ENCODE measurements at regions of chr20 and their contacts with region 1.

Region 1: GRCh38 chr20:45097485-45098102 is 3.3 kb downstream of the KCNS1 start:
- DNase-seq: no peak

Region 2: DNA sequence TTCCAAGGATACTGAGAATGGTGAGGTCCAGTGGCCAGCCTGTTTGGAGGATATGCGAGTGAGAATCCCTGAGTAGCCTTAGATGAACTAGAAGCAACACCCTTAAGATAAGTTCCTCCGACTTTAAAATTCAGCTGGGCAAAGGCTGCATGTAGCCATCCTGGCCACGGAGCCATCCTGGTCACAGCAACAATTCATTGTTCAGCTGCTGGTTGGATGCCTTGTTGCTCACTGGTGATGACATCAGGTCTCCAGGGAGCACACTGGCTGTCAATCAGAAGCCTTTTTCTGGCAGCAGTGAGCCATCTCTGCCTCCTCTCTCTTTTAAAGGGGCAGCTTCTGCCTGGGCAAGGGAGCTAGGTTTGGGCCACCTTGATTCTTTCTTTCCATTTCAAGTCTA is 264.9 kb before region 1 on chr20:
- intact Hi-C with region 1: no loop called
- DNase-seq: no peak

Region 3: DNA sequence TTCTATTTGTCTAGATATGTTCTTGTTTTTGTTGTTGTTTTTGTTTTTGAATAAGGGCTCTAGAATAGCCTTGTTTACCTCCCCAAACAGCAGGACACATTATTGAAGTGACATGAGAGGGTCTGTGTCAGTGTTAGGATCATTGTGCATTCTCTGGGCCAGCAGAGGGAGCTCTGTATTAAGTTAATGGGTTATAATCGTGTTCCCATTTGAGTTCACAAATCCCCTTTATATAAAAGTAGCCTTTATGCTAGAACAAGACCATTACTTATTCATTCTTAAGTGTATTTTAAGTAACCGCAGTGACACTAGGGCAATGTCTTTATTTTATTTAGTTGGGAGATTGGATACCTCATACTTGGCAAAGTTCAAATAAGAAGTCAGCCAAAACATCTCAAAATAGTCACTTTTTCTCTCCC is 86.5 kb before region 1 on chr20:
- intact Hi-C with region 1: loop called in 1 of 2 experiments (anchors 2 kb)
- DNase-seq: no peak

Region 4: GRCh38 chr20:45041464-45042337 is 55.9 kb before region 1 on chr20:
- intact Hi-C with region 1: loop called in 1 of 2 experiments (anchors 2 kb)
- DNase-seq: no peak